Dorsolateral prefrontal cortex (tissue), 120 donors: ENCODE measurements at regions of chr5 and their contacts with region 1.

Region 1: GRCh38 chr5:132490486-132491367 is at the start of gene IRF1:
- DNase-seq: peak; percentile 89 to 98 (median 94)
- H3K4me3 ChIP-seq: peak within 1 kb of the TSS; percentile 58 to 92 (median 81)
- H3K27ac ChIP-seq: peak within 1 kb of the TSS; percentile 58 to 97 (median 92)
- H3K27me3 ChIP-seq: no peaks in the 10 kb centered on the region
- CTCF ChIP-seq: peak in 48 of 56 donors; percentile 17 to 66 (median 42)
- total RNA-seq, gene IRF1: 2.5 to 38.3 (median 8.3) TPM

Region 2: DNA sequence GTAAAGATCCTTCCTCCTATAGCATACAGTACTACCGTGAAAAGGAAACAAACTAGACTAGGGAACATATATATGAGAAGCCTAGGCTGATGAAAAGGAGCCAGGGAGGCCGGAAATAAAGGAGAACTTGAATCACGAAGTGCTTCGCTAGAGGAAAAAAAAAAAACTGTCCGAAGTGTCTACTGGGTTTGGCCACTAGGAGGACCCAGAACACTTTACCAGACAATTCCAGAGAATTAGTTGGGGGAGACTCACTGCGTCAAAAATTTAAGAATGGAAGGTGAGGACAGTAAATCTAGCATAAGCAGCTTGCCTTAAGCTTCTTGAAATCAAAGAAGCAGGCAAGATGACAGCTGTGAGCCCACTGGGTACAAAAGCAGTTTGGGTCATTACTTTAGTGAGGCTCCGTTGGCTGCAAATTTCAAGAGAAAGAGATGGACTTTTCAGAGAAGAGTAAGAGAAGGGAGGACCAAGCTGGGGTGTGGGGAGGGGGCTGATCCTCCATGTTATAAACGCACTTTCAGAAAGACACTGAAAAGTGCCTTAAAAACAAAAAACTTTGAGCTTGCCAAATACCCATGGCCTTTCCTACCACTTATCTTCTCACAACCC is 310.5 kb before region 1 on chr5:
- intact Hi-C with region 1: loop called in 1 of 2 experiments (anchors 5 kb)
- DNase-seq: peak in 1 of 10 donors; percentile 9
- H3K4me3 ChIP-seq: peak overlapping the region in 12 of 59 donors; percentile 1 to 33 (median 6)
- H3K27ac ChIP-seq: no peak overlapping the region
- H3K27me3 ChIP-seq: no peaks in the 10 kb centered on the region
- CTCF ChIP-seq: peak; percentile 45 to 80 (median 71)

Region 3: GRCh38 chr5:132363431-132364112 is 127.2 kb before region 1 on chr5:
- intact Hi-C with region 1: no loop called
- DNase-seq: peak in 1 of 10 donors; percentile 43
- H3K4me3 ChIP-seq: peak overlapping the region in 1 of 59 donors; percentile 1
- H3K27ac ChIP-seq: peak overlapping the region in 26 of 59 donors; percentile 0 to 59 (median 24)
- H3K27me3 ChIP-seq: no peaks in the 10 kb centered on the region
- CTCF ChIP-seq: no peak

Region 4: DNA sequence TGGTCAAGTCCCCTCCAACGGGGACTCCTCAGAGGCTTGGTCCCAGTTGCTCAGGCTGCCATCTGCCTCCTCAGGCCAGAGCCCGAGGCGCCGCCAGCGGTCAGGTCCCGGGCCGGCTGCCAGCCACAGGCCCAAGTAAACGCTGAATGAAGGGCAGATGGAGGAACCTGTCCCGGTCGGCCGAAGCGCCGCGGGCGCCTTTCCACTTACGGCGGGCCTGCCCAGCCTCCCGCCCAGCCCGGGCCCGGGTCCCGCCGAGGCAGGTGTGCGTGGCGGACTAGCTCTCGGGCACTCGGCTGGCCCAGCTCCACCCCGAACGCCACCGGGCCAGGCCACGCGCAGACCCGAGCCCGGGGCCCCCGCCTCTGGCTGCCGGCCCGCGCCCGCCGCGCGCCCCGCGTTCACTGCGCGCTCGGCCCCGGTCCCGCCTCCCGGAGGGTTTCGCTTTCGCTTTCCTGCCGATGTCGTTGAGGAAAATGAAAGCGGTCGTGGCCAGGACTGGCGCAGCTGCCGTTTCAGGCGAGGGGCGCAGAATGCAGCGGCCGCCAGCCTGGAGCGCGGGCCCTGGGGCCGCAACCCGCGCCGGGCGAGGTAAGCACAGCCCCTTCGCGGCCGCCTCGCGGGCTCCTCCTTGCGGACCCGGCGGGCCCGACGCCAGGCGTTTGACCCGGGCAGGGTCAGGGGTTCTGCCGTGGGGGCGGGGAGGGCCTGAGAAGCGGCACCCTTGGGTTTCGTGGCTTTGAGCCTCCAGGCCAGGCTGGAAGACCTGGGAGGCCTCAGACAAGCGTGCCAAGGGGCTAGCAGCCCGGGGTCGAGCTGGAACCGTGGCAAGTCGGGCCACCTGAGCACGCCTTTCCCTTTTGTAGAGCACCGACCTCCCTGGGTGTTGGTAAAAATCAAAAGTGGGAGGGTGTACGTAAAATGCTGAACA is 80.0 kb before region 1 on chr5:
- intact Hi-C with region 1: loop called (anchors 2 to 5 kb)
- DNase-seq: peak in 9 of 10 donors; percentile 55 to 83 (median 62)
- H3K4me3 ChIP-seq: peak overlapping the region; percentile 63 to 95 (median 83)
- H3K27ac ChIP-seq: peak overlapping the region; percentile 88 to 99 (median 97)
- H3K27me3 ChIP-seq: no peaks in the 10 kb centered on the region
- CTCF ChIP-seq: peak in 55 of 56 donors; percentile 13 to 73 (median 53)

Region 5: DNA sequence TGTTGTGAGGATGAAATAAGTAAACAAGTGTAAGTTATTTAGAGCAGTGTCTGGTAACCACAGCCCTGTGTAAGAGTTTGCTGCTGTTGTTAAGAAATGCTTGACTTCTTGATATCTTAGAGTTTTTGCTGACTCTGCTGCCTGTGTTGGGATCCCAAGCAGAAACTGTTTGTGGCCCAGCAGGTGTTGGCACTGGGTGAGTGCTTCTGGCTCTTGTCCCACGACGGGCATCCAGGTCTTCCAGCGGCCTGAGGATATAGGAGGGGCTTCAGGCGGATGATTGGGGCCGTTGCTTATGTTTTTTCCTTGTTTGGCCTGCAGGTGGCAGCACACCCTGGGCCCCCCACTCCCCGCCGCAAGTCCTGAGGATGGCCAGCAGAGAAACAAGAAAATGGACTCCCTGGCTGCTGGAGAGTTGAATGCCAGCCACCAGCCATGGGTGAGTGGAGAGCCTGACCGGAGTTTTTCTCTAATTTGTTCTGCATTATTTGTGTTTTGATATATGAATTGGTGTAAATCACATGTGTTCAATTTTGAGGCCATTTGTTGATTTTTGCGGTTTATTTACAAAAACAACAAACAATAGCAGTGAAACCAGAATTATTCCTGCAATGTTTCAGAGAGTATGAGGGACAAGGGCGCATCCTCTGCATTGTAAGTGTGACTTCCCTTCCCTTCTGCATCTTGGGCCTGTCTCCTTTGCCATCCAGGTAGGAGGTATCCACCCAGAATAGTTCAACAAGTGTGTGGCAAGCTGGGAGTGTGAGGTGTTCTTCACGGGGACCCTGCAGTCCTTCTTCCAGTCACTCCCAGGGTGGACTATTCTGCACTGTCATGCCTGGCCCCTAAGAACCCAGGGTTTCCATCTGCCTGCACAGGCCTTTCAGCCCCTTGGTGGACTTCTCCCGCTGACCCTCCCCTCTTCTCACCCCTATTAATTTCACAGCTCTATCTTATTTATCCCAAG is 70.9 kb before region 1 on chr5:
- intact Hi-C with region 1: loop called (anchors 2 to 5 kb)
- DNase-seq: peak in 9 of 10 donors; percentile 53 to 83 (median 69)
- H3K4me3 ChIP-seq: peak overlapping the region in 33 of 59 donors; percentile 0 to 42 (median 15)
- H3K27ac ChIP-seq: peak overlapping the region in 57 of 59 donors; percentile 3 to 83 (median 65)
- H3K27me3 ChIP-seq: no peaks in the 10 kb centered on the region
- CTCF ChIP-seq: peak; percentile 77 to 96 (median 90)

Region 6: DNA sequence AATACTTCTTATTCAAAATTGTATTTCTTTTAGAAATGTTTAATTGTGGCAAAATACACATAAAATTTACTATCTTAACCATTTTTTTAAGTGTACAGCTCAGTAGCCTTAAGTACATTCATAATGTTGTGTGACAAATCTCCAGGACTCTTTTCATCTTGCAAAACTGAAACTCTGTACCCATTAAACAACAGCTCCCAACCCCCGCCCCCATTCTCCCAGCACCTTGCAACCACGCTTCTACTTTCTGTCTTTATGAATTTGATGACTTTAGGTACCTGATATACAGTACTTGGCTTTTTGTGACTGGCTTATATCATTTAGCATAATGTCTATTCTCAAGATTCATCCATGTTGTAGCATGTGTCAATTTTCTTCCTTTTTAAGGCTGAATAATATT is 55.4 kb after region 1 on chr5:
- intact Hi-C with region 1: no loop called
- DNase-seq: no peak
- H3K4me3 ChIP-seq: no peak overlapping the region
- H3K27ac ChIP-seq: no peak overlapping the region
- H3K27me3 ChIP-seq: no peaks in the 10 kb centered on the region
- CTCF ChIP-seq: no peak

Region 7: DNA sequence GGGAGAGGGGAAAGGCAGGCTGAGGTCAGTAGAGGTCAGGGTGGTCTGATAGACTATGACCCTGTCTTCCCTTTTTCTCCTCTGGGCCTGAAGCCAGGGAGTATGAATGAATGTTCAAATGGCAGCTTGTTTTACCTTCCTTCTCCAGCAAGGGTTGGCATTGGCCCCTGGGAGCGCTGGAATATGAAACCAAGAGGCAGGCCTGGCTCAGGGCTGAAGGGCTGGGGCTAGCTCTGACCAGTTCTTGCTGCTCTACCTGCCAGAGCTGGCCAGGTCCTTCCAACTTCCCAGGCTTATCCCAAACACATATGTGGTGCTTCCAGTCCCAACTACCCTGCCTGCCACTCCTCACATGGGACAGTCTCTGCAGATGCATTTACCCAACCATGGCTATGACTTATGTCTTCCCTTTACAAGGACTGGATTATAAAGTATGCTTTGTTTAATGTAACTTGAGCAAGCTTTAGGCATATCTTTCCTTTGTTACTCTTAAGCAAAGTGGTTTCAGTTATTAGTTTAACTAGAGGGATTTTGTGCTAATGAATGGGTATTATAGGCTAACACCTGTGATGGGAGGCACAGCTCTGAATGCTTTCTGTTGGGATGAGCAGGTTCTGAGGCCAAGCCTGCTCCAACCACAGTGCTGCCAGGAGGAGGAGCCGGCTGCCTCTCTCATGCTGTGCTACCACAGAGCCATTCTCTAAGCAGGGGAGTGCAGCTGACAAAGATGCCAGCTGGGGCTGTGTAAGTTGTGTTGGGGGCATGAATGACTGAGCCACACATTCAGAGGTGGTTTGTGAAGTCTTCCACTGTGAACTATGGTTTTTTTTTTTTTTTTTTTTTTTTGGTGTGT is 262.6 kb after region 1 on chr5:
- intact Hi-C with region 1: no loop called
- DNase-seq: peak in 9 of 10 donors; percentile 67 to 87 (median 81)
- H3K4me3 ChIP-seq: no peak overlapping the region
- H3K27ac ChIP-seq: peak overlapping the region in 58 of 59 donors; percentile 27 to 94 (median 82)
- H3K27me3 ChIP-seq: no peaks in the 10 kb centered on the region
- CTCF ChIP-seq: peak in 50 of 56 donors; percentile 22 to 71 (median 48)

Region 8: DNA sequence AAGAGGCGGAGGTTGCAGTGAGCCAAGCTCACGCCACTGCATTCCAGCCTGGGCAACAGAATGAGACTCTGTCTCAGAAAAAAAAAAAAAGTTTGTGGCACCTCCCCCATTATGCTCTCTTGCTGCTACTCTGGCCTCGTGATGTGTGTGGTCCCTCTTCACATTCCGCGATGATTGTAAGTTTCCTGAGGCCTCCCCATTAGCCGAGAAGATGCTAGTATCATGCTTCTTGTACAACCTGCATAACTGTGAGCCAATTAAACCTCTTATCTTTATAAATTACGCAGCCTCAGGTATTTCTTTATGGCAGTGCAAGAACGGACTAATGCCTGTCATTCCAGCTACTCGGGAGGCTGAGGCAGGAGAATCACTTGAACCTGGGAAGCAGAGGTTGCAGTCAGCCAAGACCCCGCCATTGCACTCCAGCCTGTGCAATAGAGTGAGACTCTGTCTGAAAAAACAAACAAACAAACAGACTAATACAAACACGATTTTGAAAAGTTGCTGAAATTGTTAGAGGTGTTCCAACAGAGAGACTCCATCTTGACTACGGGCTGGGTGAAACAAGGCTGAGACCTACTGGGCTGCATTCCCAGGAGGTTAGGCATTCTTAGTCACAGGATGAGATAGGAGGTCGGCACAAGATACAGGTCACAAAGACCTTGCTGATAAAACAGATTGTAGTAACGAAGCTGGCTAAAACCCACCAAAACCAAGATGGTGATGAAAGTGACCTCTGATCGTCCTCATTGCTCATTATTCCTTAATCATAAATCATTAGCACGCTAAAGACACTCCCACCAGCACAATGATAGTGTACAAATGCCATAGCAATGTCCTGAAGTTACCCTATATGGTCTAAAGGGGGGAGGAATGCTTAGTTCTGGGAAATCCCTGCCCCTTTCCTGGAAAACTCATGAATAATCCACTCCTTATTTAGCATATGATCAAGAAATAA is 481.0 kb after region 1 on chr5:
- intact Hi-C with region 1: no loop called
- DNase-seq: no peak
- H3K4me3 ChIP-seq: no peak overlapping the region
- H3K27ac ChIP-seq: no peak overlapping the region
- H3K27me3 ChIP-seq: no peaks in the 10 kb centered on the region
- CTCF ChIP-seq: no peak